PC-3 (cell line): ENCODE measurements at regions of chr2 and their contacts with region 1.

Region 1: GRCh38 chr2:140863713-140864112 is 1267.1 kb downstream of the LRP1B start:
- DNase-seq: peak; percentile 76
- ATAC-seq: peak; percentile 48
- H3K4me3 ChIP-seq: no peak overlapping the region
- H3K27ac ChIP-seq: no peak overlapping the region
- H3K4me1 ChIP-seq: no peaks in the 10 kb centered on the region
- H3K27me3 ChIP-seq: no peaks in the 10 kb centered on the region
- CTCF ChIP-seq: peak; percentile 74

Region 2: DNA sequence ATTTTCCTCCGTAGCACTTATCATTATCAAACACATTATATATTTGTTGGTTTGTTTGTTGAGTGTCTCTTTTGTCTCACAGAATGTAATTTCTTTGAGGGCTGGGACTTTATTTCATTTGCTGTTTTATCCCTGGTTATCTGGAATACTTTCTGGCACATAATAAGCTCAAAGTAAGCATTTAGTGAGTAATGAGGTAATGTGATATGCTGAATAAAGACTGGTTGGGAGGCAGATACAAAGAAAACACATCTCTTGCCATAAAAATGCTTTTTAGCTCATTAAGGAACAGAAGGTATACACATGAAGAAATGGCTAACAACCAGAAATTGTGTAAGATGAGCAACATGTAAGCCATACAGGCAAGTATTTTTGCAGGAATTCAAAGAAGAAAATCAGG is 144.7 kb before region 1 on chr2:
- CTCF ChIA-PET with region 1: no interaction called
- POLR2A ChIA-PET with region 1: no interaction called
- intact Hi-C with region 1: loop called (anchors 1 kb)
- DNase-seq: no peak
- ATAC-seq: no peak
- H3K4me3 ChIP-seq: no peak overlapping the region
- H3K27ac ChIP-seq: no peak overlapping the region
- H3K4me1 ChIP-seq: no peaks in the 10 kb centered on the region
- H3K27me3 ChIP-seq: no peaks in the 10 kb centered on the region
- CTCF ChIP-seq: no peak